Ascending aorta (tissue), 2 donors: ENCODE measurements at regions of chr1 and their contacts with region 1.

Region 1: DNA sequence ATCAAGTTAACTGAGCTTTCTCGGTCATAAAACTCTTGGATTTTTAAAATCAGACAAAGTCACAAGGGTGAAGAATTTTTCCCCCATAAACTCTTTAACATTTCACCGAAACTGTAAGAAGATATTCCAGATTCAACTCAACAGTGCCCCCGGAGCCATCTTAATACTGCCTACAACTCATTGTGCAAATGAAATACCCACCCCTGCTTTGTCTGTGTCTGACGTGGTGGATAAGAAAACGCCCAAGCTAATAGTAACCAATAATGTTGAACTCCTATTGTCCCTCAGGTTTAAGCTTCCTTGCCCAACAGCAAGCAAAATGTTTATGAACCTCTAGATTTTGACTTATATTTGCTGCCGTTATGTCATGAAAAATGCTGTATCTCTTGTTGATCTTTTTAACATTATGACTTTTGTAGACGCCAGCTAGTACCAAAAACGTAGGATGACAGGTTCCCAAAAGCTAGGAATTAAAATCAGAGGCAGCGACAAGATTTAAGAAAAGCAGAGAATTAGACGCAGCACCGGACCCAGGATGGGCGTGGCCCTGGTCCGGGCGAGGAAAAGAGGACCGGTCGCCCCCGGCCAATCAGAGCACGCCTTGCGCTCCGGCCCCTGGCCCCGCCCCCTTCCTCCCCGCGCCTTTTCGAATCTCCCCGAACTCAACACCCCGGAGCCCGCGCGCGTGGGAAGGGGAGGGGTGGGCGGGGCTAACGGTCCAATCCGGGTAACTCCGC is 1.1 kb downstream of the STMN1 start:
- DNase-seq: peak; percentile 81 to 97
- H3K4me3 ChIP-seq: peak overlapping the region; percentile 74 to 90
- H3K27ac ChIP-seq: peak overlapping the region; percentile 32 to 65
- H3K4me1 ChIP-seq: peaks cover 0 to 13% of the 10 kb centered on the region in 2 donors
- H3K27me3 ChIP-seq: no peaks in the 10 kb centered on the region
- CTCF ChIP-seq: no peak

Region 2: DNA sequence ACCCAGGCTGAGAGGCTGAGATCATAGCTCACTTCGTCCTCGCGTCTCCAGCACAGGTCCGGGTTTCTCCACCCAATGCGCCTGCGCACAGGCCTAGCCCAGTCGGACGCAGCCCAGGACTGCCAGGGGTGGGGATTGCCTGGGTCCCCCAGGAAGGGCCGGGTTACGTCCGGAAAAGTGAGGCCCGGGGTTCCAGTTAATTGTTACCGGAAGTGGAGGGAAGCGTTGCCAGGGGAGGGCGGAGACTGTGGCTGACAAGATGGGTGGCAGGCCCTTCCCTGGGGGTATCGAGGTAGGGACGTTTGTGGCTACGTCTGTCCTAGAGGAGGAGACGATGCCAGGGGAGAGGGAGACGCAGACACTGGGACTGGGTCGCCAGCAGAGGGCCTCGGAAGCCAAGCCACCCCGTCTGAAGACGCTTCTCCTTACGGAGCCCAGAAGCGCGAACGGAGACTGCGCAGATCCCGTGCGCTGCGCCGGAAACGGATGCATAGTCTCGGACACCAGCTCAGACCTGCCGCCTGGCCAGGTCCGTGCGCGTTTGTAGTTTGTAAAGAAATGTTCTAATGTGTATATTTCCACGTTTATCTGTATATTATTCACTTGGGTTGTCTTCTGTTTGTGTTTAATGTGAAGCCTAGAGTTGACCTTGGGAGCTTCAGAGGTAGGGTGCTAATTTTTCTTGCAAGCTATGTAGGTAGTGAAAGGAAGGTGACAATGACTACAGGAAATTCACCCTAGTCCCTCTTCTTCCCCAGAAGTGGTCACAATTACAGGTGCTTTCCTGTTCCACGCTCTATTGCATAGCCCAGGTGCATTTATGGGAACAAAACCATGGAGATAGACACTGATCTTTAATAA is 665.2 kb before region 1 on chr1:
- intact Hi-C with region 1: loop called (anchors 10 kb)
- DNase-seq: peak; percentile 81 to 96
- H3K4me3 ChIP-seq: peak overlapping the region; percentile 44 to 49
- H3K27ac ChIP-seq: peak overlapping the region; percentile 78 to 92
- H3K4me1 ChIP-seq: peaks cover 10 to 28% of the 10 kb centered on the region in 2 donors
- H3K27me3 ChIP-seq: no peaks in the 10 kb centered on the region
- CTCF ChIP-seq: peak; percentile 52 to 80 (median 71)

Region 3: GRCh38 chr1:25987951-25988350 is 82.8 kb after region 1 on chr1:
- intact Hi-C with region 1: no loop called
- DNase-seq: no peak
- H3K4me3 ChIP-seq: no peak overlapping the region
- H3K27ac ChIP-seq: no peak overlapping the region
- H3K4me1 ChIP-seq: no peaks in the 10 kb centered on the region
- H3K27me3 ChIP-seq: no peaks in the 10 kb centered on the region
- CTCF ChIP-seq: no peak